MCF 10A (cell line): ENCODE measurements at regions of chr14 and their contacts with region 1.

Region 1: GRCh38 chr14:25042362-25043299 is 7.3 kb downstream of the STXBP6 start:
- DNase-seq: no peak
- H3K4me3 Mint-ChIP-seq: no peak overlapping the region
- H3K27ac Mint-ChIP-seq: no peak overlapping the region
- H3K4me1 Mint-ChIP-seq: peaks cover 10% of the 10 kb centered on the region
- H3K27me3 Mint-ChIP-seq: no peaks in the 10 kb centered on the region
- CTCF ChIP-seq: peak; percentile 39

Region 2: GRCh38 chr14:24734878-24735500 is 307.6 kb before region 1 on chr14:
- CTCF ChIA-PET with region 1: no interaction called
- POLR2A ChIA-PET with region 1: no interaction called
- intact Hi-C with region 1: loop called (anchors 2 kb)
- DNase-seq: peak; percentile 17
- H3K4me3 Mint-ChIP-seq: no peak overlapping the region
- H3K27ac Mint-ChIP-seq: no peak overlapping the region
- H3K4me1 Mint-ChIP-seq: no peaks in the 10 kb centered on the region
- H3K27me3 Mint-ChIP-seq: no peaks in the 10 kb centered on the region
- CTCF ChIP-seq: peak; percentile 55

Region 3: GRCh38 chr14:24806061-24806678 is 236.5 kb before region 1 on chr14:
- CTCF ChIA-PET with region 1: no interaction called
- POLR2A ChIA-PET with region 1: no interaction called
- intact Hi-C with region 1: loop called (anchors 1 kb)
- DNase-seq: no peak
- H3K4me3 Mint-ChIP-seq: no peak overlapping the region
- H3K27ac Mint-ChIP-seq: no peak overlapping the region
- H3K4me1 Mint-ChIP-seq: no peaks in the 10 kb centered on the region
- H3K27me3 Mint-ChIP-seq: no peaks in the 10 kb centered on the region
- CTCF ChIP-seq: peak; percentile 69

Region 4: GRCh38 chr14:24817212-24818057 is 225.2 kb before region 1 on chr14:
- CTCF ChIA-PET with region 1: no interaction called
- POLR2A ChIA-PET with region 1: no interaction called
- intact Hi-C with region 1: loop called (anchors 1 kb)
- DNase-seq: no peak
- H3K4me3 Mint-ChIP-seq: no peak overlapping the region
- H3K27ac Mint-ChIP-seq: no peak overlapping the region
- H3K4me1 Mint-ChIP-seq: peaks cover 6% of the 10 kb centered on the region
- H3K27me3 Mint-ChIP-seq: no peaks in the 10 kb centered on the region
- CTCF ChIP-seq: peak; percentile 25

Region 5: DNA sequence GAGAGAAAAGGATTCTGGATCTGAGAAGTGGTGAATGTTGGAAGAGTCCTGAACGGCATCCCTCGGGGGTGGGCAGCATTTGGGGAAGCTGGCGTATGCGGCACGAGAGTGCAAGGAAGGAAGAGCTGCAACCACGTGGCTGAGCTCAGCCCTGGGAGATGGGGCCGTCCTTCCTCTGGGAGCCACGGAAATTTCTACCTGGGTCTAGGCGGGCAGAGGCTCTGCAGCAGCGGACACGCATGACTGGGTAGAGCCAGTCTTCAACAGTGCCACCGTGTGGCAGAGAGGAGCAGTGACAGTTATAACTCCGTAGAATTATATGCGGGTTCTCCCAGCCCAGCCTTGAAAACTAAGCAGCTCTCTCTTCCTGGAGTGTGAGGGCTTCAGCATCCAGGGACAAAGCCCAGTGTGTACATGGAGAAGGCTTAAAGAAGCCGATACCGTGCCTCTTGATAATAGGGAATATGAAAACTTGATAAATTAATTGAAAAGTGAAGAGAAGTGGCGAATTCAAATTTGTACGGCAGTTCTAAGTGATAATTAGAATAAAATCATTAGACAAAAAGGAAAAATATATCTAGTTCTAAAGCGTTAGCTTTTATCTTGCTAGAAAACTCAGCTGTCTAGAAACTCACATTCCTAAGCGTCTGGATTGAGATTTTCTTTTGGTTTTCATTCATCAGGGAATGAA is 90.2 kb after region 1 on chr14:
- CTCF ChIA-PET with region 1: no interaction called
- POLR2A ChIA-PET with region 1: no interaction called
- intact Hi-C with region 1: loop called (anchors 2 kb)
- DNase-seq: peak; percentile 1
- H3K4me3 Mint-ChIP-seq: peak overlapping the region; percentile 42
- H3K27ac Mint-ChIP-seq: no peak overlapping the region
- H3K4me1 Mint-ChIP-seq: no peaks in the 10 kb centered on the region
- H3K27me3 Mint-ChIP-seq: peaks cover 33% of the 10 kb centered on the region
- CTCF ChIP-seq: peak; percentile 60